Panc1 (cell line): ENCODE measurements at regions of chrX and their contacts with region 1.

Region 1: DNA sequence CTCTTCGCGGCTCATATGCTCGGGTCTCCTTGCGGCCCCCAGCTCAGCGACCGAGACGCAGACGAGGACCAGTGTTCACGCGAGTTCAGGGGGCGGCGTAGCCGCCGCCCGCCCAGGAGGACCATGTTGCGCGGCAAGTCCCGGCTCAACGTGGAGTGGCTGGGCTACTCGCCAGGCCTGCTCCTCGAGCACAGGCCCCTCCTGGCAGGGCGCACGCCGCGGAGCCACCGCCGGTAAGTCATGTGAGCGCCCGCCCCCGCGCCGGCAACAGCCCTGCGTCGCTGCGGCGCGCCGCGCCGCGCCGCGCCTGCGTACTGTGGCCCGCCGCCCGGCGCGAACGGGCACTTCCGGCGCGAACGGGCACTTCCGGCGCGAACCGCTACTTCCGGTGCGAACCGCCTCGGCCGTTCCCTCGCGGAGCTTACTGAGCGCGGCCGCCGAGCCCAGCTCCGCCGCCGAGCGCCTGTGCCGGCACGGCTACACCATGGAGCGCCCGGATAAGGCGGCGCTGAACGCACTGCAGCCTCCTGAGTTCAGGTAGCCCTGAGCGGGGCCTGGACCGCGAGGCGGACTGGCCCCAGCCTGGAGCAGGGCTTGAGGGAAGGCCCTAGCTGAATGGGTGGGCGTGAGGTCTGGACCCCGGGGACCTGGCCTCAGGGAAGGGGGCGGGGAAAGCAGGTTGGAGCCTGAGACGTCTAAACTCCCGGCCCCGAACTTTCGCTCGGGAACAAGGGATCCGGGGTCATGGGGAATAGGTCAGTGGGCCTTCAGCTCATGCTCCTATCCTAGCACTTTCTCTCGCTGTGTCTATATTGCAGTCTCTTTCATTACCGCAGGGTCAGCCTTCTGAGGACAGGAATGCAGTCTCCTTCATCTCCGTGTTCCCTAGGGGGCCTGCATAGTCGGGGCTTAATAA is at the start of gene VMA21:
- DNase-seq: no peak
- ATAC-seq: peak; percentile 98
- H3K4me3 ChIP-seq: peak within 1 kb of the TSS; percentile 93 to 100
- H3K27ac ChIP-seq: peak within 1 kb of the TSS; percentile 99
- H3K4me1 ChIP-seq: peaks cover 39% of the 10 kb centered on the region
- H3K27me3 ChIP-seq: no peaks in the 10 kb centered on the region
- CTCF ChIP-seq: no peak
- total RNA-seq, gene VMA21: 117 TPM

Region 2: GRCh38 chrX:150846884-150847487 is 550.1 kb before region 1 on chrX:
- CTCF ChIA-PET with region 1: no interaction called
- POLR2A ChIA-PET with region 1: interaction called, 14 read pairs
- in situ Hi-C with region 1: no loop called
- intact Hi-C with region 1: no loop called
- DNase-seq: no peak
- ATAC-seq: no peak
- H3K4me3 ChIP-seq: no peak overlapping the region
- H3K27ac ChIP-seq: peak overlapping the region; percentile 84
- H3K4me1 ChIP-seq: peaks cover 56% of the 10 kb centered on the region
- H3K27me3 ChIP-seq: no peaks in the 10 kb centered on the region
- CTCF ChIP-seq: no peak